ENCODE measurements at regions of chr1 and their contacts with region 1.

Region 1: GRCh38 chr1:110766025-110766647 is 91.4 kb upstream of the KCNA3 start:
- DNase-seq: peak; percentile 14
- H3K4me3 ChIP-seq: no peak overlapping the region
- CTCF ChIP-seq: peak; percentile 66

Region 2: GRCh38 chr1:110619412-110620249 is 146.5 kb before region 1 on chr1:
- CTCF ChIA-PET with region 1: interaction called, 29 read pairs
- POLR2A ChIA-PET with region 1: interaction called, 3 read pairs
- DNase-seq: no peak
- H3K4me3 ChIP-seq: no peak overlapping the region
- CTCF ChIP-seq: peak; percentile 92

Region 3: DNA sequence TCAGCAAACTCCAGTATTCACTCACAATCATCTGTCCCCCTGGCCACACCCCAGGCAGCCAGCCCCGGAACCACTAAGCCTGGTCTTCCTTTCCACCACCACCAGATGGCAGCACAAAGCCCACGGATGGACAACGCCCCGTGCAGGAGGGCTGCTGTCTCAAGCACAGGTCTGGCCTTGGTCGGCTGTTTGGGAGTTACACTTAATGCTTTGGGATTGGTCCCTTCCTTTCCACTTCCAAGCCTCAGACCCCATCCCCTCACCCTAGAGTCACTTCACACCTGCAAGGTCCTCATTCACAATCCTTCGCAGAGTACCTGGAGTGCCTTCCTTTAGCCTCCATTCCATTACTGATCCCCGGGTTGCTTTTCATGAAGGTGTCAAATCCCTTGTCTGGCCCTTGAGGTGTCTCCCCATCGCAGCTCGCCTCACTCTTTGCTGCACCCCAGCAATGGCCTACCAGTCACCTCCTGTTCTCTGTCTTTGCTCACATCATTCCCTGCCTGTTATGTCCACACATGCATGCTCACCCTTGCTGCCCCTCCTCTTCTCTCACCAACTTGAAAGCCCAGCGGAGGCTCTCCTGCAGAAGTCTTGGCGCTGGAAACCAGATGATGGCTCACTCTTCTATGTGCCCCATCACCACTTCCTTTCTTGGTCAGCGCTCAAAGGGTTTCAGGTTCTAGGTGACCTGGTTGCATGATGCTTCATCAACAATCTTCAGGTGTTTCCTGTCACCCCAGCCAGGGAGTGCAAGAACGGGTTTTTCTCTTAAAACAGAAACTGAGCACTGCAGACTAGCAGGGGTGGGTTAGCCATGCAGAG is 135.1 kb before region 1 on chr1:
- CTCF ChIA-PET with region 1: interaction called, 41 read pairs
- POLR2A ChIA-PET with region 1: no interaction called
- DNase-seq: no peak
- H3K4me3 ChIP-seq: no peak overlapping the region
- CTCF ChIP-seq: peak; percentile 83

Region 4: GRCh38 chr1:110749960-110750359 is 16.2 kb before region 1 on chr1:
- CTCF ChIA-PET with region 1: interaction called, 12 read pairs
- POLR2A ChIA-PET with region 1: no interaction called
- DNase-seq: no peak
- H3K4me3 ChIP-seq: no peak overlapping the region
- CTCF ChIP-seq: no peak

Region 5: DNA sequence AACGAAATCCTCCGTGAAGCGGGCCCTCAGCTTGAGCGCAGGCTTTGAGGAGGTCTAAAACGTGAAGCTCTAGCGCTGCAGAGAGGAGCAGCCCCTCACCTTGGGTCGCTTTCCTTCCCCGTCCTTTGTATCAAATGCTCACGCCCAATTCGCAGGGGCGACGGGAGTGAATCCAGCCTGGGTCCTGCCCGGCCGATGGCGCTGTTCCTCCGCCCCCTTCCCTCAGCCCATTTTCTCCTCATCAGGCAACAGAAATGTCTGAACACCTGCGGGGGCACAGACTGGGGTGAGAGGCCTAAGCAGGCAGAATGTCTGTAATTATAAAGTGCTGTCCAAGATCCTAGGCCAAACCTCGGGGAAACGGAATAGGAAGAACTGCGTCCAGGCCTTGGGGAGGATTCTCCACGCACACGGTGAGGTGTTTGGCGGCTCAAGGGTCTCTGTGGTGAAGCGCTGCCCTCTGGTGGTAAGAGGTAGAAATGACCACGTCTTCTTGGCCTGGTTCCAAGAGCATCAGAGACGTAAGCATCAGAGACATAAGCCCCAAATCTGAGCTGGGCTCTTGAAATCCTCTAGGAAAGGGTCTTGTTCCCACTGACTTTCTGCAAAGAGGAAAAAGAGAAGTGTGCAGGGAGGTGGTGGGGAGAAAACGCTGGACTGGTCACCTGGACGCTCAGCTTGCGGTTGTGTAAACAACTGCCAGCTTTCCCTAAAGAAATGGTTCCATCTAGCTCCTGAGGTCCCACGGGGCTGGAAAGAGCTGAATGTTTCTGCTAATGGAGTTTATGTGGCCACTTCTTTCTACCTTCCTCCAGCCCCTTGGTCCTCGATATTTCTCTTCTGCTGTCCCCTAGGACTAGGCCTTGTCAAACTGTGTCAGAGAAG is 14.7 kb after region 1 on chr1:
- CTCF ChIA-PET with region 1: interaction called, 43 read pairs
- POLR2A ChIA-PET with region 1: no interaction called
- DNase-seq: no peak
- H3K4me3 ChIP-seq: no peak overlapping the region
- CTCF ChIP-seq: peak; percentile 73